ENCODE measurements at regions of chr15 and their contacts with region 1.

Region 1: GRCh38 chr15:34373951-34374350 is 7.0 kb upstream of the LPCAT4 start:
- DNase-seq: no peak
- H3K4me3 ChIP-seq: no peak overlapping the region
- H3K4me1 ChIP-seq: peaks cover 11% of the 10 kb centered on the region
- H3K27me3 ChIP-seq: no peaks in the 10 kb centered on the region

Region 2: DNA sequence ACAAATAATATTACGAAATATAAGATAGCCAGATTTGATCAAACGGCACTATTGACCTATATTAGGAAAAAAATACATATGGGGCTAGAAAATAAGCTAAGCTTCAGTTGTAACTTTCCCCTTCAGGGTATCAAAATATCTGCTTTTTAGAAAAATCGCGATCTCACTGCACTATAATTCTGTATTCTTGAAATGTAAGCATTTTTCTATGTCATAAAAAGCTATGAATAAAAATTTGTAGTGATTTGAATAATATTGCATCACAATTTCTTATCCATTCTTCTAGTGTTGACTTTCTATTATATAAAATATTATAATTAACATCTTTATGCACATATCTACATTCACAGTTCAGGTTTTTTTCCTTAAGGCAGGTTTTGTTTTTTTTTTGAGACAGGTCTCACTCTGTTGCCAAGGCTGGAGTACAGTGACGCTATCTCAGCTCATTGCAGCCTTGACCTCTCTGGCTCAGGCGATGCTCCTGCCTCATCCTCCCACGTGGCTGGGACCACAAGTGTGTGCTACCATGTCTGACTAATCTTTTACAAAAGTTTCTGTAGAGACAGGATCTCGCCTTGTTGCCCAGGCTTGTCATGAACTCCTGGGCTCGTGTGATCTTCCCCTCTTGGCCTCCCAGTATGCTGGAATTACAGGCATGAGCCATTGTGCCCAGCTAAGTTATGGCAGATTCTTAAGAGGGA is 127.5 kb before region 1 on chr15:
- in situ Hi-C with region 1: no loop called
- DNase-seq: no peak
- H3K4me3 ChIP-seq: no peak overlapping the region
- H3K4me1 ChIP-seq: no peaks in the 10 kb centered on the region
- H3K27me3 ChIP-seq: no peaks in the 10 kb centered on the region

Region 3: DNA sequence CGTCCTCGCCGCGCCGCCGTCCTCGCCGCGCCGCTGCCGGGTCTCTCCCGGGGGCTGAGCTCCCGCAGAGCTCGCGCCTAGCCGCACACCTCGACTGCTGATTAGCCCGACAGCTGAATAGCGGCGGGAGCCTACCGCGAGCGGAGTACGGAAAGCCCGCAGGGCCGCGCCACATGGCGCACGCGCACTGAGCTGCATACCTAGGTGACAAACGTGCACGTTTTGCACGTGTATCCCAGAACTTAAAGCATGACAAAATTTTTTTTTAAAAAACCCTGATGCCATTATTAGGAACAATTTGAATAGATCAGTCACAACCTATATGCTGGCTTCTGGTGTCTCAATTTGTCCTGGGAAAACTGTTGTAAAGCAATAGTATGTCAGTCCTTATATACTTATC is 63.7 kb after region 1 on chr15 and contains the start of gene GOLGA8A:
- in situ Hi-C with region 1: loop called (anchors 10 kb)
- DNase-seq: peak; percentile 57 to 81
- H3K4me3 ChIP-seq: peak within 1 kb of the TSS; percentile 59
- H3K4me1 ChIP-seq: no peaks in the 10 kb centered on the region; the same call in 1 of the 2 replicates
- H3K27me3 ChIP-seq: peaks cover 3% of the 10 kb centered on the region; the same call in 1 of the 2 replicates